HEK293 (cell line): ENCODE measurements at regions of chr11 and their contacts with region 1.

Region 1: GRCh38 chr11:73478738-73479347 is 102.6 kb downstream of the RELT start:
- H3K4me3 ChIP-seq: no peak overlapping the region
- H3K27ac ChIP-seq: no peak overlapping the region
- H3K4me1 ChIP-seq: peaks cover 7% of the 10 kb centered on the region; the same call in 1 of the 2 replicates
- CTCF ChIP-seq: 0 out of 2 replicates have a peak, but pooled peaks have one; percentile 12

Region 2: DNA sequence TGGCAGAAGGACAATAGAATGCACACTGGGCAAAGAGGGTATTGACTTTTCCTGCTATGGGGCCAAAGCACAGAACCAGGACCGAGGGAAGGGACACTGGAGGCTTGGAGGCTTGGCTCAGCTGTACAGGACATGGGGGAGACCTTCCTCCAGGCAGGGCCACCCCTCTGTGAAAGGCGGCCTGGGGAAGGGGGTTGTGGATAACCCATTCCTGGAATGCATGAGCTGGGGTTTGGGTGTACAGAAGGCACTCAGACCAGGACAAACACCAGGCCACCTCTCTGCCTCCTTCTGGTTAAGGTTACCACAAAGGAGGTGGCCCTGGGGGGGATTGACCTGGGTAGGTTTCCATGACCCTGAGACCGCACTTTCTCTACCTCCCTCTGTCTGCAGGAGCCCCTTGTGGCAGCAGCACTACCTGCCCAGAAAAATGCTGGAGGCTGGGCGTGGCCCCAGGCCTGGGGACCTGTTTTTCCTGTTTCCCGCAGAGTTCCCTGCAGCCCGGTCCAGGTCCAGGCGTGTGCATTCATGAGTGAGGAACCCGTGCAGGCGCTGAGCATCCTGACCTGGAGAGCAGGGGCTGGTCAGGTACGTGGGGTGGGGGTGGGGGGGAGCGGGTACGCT is 251.1 kb before region 1 on chr11:
- CTCF ChIA-PET with region 1: no interaction called
- POLR2A ChIA-PET with region 1: no interaction called
- H3K4me3 ChIP-seq: no peak overlapping the region
- H3K27ac ChIP-seq: no peak overlapping the region
- H3K4me1 ChIP-seq: no peaks in the 10 kb centered on the region
- CTCF ChIP-seq: no peak

Region 3: GRCh38 chr11:73356979-73357797 is 121.7 kb before region 1 on chr11:
- CTCF ChIA-PET with region 1: no interaction called
- POLR2A ChIA-PET with region 1: no interaction called
- H3K4me3 ChIP-seq: no peak overlapping the region
- H3K27ac ChIP-seq: no peak overlapping the region
- H3K4me1 ChIP-seq: no peaks in the 10 kb centered on the region
- CTCF ChIP-seq: no peak

Region 4: DNA sequence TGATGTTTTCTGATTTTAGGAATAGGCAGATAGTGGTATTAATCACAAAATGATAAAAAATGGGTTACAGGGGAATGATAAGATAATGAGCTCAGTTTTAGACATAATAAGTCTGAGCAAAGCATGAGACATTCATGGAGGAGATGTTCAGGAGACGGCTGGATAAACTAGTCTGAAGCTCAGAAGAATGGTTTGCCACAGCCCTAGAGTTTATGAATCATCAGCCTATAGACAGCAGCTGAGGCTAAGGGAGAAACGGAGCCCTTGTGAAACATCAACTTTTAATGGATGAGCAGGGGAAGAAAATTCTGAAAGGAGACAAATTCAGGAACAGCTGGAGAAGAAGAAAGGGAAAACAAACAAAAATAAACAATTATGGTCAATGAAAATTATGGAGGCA is 15.5 kb before region 1 on chr11:
- CTCF ChIA-PET with region 1: interaction called, 35 read pairs
- POLR2A ChIA-PET with region 1: no interaction called
- H3K4me3 ChIP-seq: no peak overlapping the region
- H3K27ac ChIP-seq: no peak overlapping the region
- H3K4me1 ChIP-seq: no peaks in the 10 kb centered on the region
- CTCF ChIP-seq: no peak

Region 5: DNA sequence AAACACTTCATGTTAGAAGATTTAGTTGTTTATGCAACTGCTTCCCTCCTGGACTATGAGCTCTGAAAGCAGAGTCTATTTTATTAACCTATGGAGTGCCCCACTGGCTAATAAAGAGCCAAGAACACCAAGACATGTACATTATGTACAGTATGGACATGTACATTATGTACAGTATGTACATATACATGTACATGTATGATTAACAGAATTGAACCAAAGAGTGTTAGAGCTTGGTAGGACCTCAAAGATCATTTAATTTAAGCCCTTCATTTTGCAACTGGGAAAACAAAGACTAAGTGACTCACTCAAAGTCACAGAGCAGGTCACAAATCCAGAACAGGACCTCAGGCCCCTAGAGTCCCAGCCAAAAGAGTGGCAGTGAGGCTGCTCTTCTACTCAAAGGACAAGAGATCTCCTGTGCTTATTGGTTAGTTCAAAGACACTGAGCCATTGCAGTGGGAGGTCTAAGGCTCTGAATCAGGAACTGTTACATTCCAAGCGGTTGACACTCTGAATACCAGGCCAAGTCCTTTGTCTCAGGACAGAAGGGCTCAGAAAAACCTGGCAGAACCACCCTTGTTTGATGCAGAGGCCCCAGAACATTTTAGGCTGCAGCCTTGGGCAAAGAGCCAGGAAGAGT is 15.2 kb after region 1 on chr11:
- CTCF ChIA-PET with region 1: interaction called, 21 read pairs
- POLR2A ChIA-PET with region 1: no interaction called
- H3K4me3 ChIP-seq: no peak overlapping the region
- H3K27ac ChIP-seq: no peak overlapping the region
- H3K4me1 ChIP-seq: no peaks in the 10 kb centered on the region
- CTCF ChIP-seq: no peak

Region 6: DNA sequence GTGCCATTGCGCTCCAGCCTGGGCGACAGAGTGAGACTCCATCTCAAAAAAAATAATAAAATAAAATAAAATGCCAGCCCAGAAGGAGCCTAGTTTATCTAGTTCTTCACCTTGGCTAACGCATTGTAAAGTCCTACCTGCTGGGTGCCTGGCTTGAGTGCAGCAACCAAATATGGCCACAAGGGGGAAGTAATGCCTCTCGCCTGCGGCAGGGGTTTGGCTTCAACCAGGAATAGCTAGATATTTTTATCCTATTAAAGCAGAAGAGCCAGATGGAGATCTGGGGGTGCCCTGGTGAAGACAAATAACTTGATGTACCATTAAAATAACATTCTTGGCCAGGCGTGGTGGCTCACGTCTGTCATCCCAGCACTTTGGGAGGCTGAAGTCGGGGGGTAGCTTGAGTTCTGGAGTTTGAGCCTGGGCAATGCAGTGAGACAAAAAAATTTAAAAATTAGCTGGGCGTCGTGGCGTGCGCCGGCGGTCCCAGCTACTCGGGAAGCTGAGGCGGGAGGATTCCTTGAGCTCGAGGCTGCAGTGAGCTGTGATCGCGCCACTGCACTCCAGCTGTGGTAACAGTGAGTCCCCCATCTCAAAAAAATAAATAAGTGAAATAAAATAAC is 147.0 kb after region 1 on chr11:
- CTCF ChIA-PET with region 1: interaction called, 31 read pairs
- POLR2A ChIA-PET with region 1: interaction called, 3 read pairs
- H3K4me3 ChIP-seq: no peak overlapping the region
- H3K27ac ChIP-seq: no peak overlapping the region
- H3K4me1 ChIP-seq: no peaks in the 10 kb centered on the region
- CTCF ChIP-seq: peak; percentile 54; the same call in 1 of the 2 replicates